ENCODE measurements at regions of chr21 and their contacts with region 1.

Region 1: DNA sequence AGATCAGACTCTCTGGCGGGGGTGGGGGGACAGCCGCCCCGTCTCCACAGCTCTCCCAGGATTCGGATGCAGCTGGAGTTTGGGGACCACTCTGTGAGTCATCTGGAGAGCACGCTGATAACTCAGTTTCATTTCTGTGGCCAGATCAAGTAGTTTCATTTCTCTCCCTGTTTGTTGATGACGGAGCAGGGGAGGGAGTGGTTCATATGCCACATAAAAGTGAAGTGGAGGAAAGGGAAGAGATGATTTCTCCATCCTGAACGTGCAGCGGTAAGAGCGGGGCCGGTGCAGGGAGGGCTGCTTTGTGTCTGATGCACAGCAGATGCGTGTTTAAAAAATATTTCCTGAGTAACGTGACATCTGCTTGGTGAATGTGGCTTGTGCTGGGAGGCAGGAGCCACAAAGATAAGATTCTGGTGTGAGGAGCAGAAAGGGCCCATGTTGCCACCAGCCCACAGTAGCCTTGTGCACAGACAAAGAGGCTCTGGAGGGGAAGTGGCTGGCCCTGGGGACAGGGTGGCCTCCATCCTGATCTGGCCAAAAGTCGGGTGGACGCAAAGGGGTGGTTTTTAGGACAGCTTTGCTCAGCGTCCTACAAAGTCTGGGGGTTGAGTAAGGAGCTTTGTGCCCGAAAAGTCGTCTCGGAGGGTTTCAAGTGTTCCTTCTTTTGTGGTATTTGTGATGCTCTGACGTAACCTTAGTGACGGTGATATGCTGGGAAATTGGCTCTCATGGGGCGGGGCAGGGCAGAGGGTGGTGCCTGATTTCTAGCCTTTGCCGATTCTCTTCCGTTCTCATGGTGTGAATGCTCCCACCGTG is at the start of gene MX2:
- DNase-seq: peak; percentile 91
- ATAC-seq: peak; percentile 69
- H3K4me3 ChIP-seq: peak within 1 kb of the TSS; percentile 84
- H3K27ac ChIP-seq: peak within 1 kb of the TSS; percentile 89
- H3K4me1 ChIP-seq: peaks cover 30% of the 10 kb centered on the region
- H3K27me3 ChIP-seq: no peaks in the 10 kb centered on the region
- CTCF ChIP-seq: no peak
- EP300 ChIP-seq: peak; percentile 70 to 91
- POLR2A ChIP-seq: peak; percentile 71
- RAD21 ChIP-seq: 0 out of 2 replicates have a peak, but pooled peaks have one; percentile 9
- polyA plus RNA-seq, gene MX2: 10.5 to 13.9 TPM

Region 2: DNA sequence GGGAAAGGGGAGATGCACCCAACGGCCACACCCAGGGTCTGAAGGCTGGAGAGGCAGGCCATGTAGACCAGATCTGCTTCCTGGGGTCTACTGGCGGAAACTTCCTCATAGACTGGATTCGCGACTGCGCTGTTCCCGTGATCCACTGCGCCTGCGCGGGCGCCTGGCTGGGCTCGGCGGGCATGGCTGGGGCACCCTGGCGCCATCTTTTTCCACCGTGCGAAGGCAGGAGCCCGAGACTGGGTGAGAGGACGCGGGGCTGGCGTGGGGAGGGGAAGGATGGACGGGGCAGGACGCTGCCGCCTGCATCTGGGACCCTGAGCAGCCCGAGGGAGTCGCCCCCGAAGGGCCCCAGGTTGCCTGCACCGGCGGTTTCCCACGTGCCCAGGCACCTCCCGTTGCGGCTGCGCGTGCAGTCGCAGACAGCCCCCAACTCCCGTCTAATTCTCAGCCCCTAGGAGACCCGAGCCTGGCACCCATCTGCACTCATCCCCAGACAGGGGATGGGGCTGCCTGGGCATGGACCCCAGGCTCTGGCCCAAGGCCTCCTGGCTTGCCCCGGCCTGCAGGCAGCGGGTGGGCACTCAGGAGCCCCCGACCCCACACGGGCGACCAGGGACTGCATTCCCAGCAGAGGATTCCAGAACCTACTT is 57.8 kb before region 1 on chr21:
- CTCF ChIA-PET with region 1: no interaction called
- POLR2A ChIA-PET with region 1: no interaction called
- RAD21 ChIA-PET with region 1: no interaction called
- SMC1A ChIA-PET with region 1: no interaction called
- in situ Hi-C with region 1: no loop called
- intact Hi-C with region 1: no loop called
- DNase-seq: no peak
- ATAC-seq: no peak
- H3K4me3 ChIP-seq: no peak overlapping the region
- H3K27ac ChIP-seq: no peak overlapping the region
- H3K4me1 ChIP-seq: no peaks in the 10 kb centered on the region
- H3K27me3 ChIP-seq: peaks cover 0 to 2% of the 10 kb centered on the region in 2 experiments; a peak in 1 of 4 replicates
- CTCF ChIP-seq: no peak
- EP300 ChIP-seq: no peak
- POLR2A ChIP-seq: no peak
- RAD21 ChIP-seq: no peak

Region 3: DNA sequence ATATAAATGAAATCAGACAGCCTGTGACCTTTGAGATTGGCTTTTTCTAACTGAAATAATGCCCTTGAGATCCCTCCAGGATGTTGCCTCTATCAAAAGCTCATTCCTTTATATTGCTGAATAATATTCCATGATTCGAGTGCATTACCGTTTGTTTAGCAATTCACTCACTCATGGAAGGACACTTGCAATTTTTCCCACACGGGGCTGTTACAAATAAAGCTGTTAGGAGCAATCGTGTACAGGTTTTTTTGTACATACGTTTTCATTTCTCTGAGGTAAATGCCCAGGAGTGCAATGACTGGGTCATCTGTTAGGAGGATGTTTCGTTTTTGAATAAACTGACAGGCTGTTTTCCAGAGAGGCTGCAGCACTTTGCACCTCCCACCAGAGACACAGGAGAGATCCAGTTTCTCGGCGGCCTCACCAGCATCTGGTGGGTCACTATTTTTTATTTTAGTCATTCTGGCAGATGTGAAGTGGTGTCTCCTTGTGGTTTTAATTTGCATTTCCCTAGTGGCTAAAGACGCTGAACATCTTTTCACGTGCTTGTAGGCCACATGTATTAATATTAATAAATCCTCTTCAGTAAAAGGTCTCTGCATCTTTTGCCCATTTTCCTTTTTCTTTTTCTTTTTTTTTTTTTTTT is 506.2 kb after region 1 on chr21:
- CTCF ChIA-PET with region 1: no interaction called
- POLR2A ChIA-PET with region 1: no interaction called
- RAD21 ChIA-PET with region 1: no interaction called
- SMC1A ChIA-PET with region 1: no interaction called
- in situ Hi-C with region 1: no loop called
- intact Hi-C with region 1: loop called (anchors 10 kb)
- DNase-seq: peak; percentile 79
- ATAC-seq: peak; percentile 60
- H3K4me3 ChIP-seq: peak overlapping the region; percentile 57; the same call in 1 of the 2 replicates
- H3K27ac ChIP-seq: peak overlapping the region; percentile 64
- H3K4me1 ChIP-seq: peaks cover 54% of the 10 kb centered on the region
- H3K27me3 ChIP-seq: no peaks in the 10 kb centered on the region
- CTCF ChIP-seq: no peak
- EP300 ChIP-seq: peak; percentile 68 to 85; a peak in 3 of 4 replicates
- POLR2A ChIP-seq: 0 out of 2 replicates have a peak, but pooled peaks have one; percentile 23
- RAD21 ChIP-seq: no peak

Region 4: GRCh38 chr21:42009831-42010523 is 648.0 kb after region 1 on chr21 and contains the start of gene ZBTB21:
- CTCF ChIA-PET with region 1: no interaction called
- POLR2A ChIA-PET with region 1: interaction called, 4 read pairs
- RAD21 ChIA-PET with region 1: no interaction called
- SMC1A ChIA-PET with region 1: no interaction called
- in situ Hi-C with region 1: no loop called
- intact Hi-C with region 1: loop called (anchors 10 kb)
- DNase-seq: peak; percentile 96
- ATAC-seq: peak; percentile 89
- H3K4me3 ChIP-seq: peak within 1 kb of the TSS; percentile 81
- H3K27ac ChIP-seq: peak within 1 kb of the TSS; percentile 96
- H3K4me1 ChIP-seq: peaks cover 5% of the 10 kb centered on the region
- H3K27me3 ChIP-seq: no peaks in the 10 kb centered on the region
- CTCF ChIP-seq: no peak
- EP300 ChIP-seq: peak in 1 of 2 experiments; percentile 27; a peak in 1 of 4 replicates
- POLR2A ChIP-seq: peak; percentile 79
- RAD21 ChIP-seq: no peak
- polyA plus RNA-seq, gene ZBTB21: 1.8 to 2.3 TPM

Region 5: GRCh38 chr21:42227909-42228708 is 866.1 kb after region 1 on chr21:
- CTCF ChIA-PET with region 1: no interaction called
- POLR2A ChIA-PET with region 1: no interaction called
- RAD21 ChIA-PET with region 1: no interaction called
- SMC1A ChIA-PET with region 1: no interaction called
- in situ Hi-C with region 1: no loop called
- intact Hi-C with region 1: loop called (anchors 10 kb)
- DNase-seq: peak; percentile 85
- ATAC-seq: peak; percentile 92
- H3K4me3 ChIP-seq: no peak overlapping the region
- H3K27ac ChIP-seq: peak overlapping the region; percentile 22
- H3K4me1 ChIP-seq: peaks cover 31% of the 10 kb centered on the region
- H3K27me3 ChIP-seq: no peaks in the 10 kb centered on the region
- CTCF ChIP-seq: no peak
- EP300 ChIP-seq: peak in 1 of 2 experiments; percentile 55; a peak in 1 of 4 replicates
- POLR2A ChIP-seq: no peak
- RAD21 ChIP-seq: no peak